ENCODE measurements at regions of chr13 and their contacts with region 1.

Region 1: DNA sequence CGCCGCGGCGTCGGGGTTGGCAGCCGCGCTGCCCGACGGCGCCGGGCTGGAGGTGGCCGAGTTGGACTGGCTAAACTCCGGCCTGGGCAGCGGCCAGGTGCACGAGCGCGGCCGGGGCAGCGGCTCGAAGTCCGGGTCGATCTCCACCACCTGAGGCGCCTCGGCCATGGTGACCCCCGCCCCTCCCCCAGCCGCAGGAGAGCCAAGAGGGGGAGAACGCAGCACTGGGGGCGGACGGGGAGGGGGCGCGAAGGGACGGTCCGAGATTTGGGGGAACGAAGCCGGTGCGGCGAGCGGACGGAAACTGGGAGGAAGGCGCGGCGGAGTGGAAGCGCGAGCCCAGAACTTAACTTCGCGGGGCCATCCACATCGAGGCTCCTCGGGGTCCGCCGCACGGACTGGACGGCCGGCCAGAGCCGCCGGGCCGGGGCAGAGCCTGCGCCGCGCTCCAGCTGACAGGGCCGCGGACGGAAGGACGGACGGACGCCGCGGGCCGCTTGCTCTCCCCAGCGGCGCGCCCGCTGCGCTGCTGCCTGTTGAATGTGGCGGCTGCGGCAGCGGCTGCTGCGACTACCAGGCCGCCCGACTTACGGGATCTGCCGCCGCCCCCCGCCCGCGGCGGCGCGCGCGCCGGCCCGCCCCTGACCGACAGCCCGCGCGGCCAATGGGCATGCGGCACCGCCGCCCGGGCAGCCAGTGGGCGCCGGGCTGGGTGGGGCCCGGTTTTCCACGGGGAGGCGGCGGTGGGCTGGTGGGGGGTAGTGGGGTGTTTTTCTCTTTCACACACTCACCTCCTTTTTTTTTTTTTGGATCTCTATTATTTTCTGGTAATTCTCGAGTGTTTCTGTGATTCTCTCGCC is at the start of gene FOXO1:
- DNase-seq: peak; percentile 97
- H3K4me3 Mint-ChIP-seq: peak within 1 kb of the TSS; percentile 93
- H3K27ac Mint-ChIP-seq: peak within 1 kb of the TSS; percentile 95
- H3K4me1 Mint-ChIP-seq: peaks cover 35% of the 10 kb centered on the region
- H3K27me3 Mint-ChIP-seq: no peaks in the 10 kb centered on the region
- total RNA-seq, gene FOXO1: 38.1 and 39.6 TPM in 2 replicates

Region 2: DNA sequence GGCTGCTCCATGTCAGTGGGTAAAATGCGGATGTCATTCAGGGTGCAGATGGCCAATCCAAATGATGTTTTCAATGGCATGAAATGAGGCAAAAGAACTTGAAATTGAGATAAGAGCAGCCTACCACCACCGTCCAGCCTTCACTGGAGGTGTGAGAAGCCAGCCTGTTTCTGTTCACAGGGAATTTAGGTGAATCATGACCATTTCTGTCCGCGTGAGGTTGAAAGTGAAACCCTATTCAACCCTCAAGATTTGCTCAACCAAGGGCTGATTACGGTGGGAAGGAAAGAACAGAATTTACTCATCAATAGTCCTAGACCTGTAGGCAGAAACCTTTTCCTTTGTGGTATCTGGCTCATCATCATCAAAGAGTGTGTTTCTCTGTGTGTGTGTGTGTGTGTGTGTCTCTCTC is 640.1 kb before region 1 on chr13:
- intact Hi-C with region 1: loop called (anchors 1 kb)
- DNase-seq: peak; percentile 91
- H3K4me3 Mint-ChIP-seq: peak overlapping the region; percentile 57
- H3K27ac Mint-ChIP-seq: peak overlapping the region; percentile 62
- H3K4me1 Mint-ChIP-seq: peaks cover 35% of the 10 kb centered on the region
- H3K27me3 Mint-ChIP-seq: peaks cover 10% of the 10 kb centered on the region

Region 3: DNA sequence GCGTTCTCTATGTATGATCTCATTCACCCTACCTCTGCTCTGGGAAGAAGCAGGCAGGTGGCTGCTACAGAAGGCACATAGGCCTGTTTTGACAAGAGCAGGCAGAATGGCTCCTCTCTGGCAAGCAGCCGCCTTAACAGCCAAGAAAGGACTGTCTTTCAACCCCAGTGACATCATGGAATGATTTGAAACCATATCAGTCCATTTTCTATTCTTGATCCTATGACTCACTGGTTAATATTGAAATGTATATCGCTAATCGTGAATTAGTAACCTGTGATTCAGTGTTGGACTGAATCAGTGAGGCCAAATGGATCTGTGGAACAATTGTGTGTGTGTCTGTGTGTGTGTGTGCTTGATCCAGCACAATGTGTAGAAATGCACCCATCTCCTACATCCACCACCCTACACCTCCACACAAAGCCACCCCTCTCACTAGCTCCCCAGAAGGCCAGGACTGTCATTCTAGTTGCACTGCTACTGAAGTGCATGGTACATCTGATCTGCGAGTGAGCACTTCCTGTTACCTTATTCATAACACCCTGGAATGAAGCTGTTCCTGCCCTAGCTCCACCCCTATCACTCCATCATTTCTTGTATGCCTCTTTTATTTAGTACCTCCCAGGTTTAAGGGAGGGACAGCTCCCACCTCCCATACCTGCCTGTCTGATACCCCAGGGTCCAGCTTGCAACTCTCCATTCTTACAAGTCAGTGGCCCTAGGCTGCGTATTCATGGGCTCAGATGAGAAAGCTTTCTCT is 459.9 kb before region 1 on chr13:
- intact Hi-C with region 1: loop called (anchors 2 kb)
- DNase-seq: peak; percentile 80
- H3K4me3 Mint-ChIP-seq: peak overlapping the region; percentile 63
- H3K27ac Mint-ChIP-seq: peak overlapping the region; percentile 97
- H3K4me1 Mint-ChIP-seq: peaks cover 37% of the 10 kb centered on the region
- H3K27me3 Mint-ChIP-seq: no peaks in the 10 kb centered on the region

Region 4: GRCh38 chr13:40371531-40372125 is 294.6 kb before region 1 on chr13:
- intact Hi-C with region 1: loop called (anchors 5 kb)
- DNase-seq: no peak
- H3K4me3 Mint-ChIP-seq: peak overlapping the region; percentile 62
- H3K27ac Mint-ChIP-seq: peak overlapping the region; percentile 54
- H3K4me1 Mint-ChIP-seq: peaks cover 39% of the 10 kb centered on the region
- H3K27me3 Mint-ChIP-seq: no peaks in the 10 kb centered on the region

Region 5: DNA sequence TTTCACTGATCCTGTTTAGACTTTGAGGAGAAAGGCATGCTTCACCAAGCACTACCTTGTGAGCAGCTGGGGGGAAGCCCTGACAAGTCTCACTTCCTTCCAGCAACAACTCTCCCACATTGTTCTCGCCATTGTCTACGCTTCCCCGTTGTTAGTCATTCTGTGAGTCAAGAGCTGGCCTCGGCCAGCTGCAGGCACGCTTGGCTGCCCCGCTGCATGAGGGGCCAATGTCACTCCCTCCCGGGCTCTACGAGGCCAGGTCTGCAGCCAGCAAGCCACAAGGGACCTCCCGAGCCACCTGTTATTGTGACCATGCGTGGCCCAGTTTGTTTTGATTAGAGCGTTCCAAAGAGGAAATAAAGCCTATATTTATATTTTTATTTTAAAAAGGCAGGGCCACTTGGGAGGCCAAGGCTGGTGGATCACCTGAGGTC is 220.7 kb before region 1 on chr13:
- intact Hi-C with region 1: no loop called
- DNase-seq: no peak
- H3K4me3 Mint-ChIP-seq: no peak overlapping the region
- H3K27ac Mint-ChIP-seq: no peak overlapping the region
- H3K4me1 Mint-ChIP-seq: peaks cover 12% of the 10 kb centered on the region
- H3K27me3 Mint-ChIP-seq: no peaks in the 10 kb centered on the region

Region 6: GRCh38 chr13:40517486-40518480 is 148.5 kb before region 1 on chr13:
- intact Hi-C with region 1: loop called (anchors 1 kb)
- DNase-seq: no peak
- H3K4me3 Mint-ChIP-seq: peak overlapping the region; percentile 72
- H3K27ac Mint-ChIP-seq: peak overlapping the region; percentile 92
- H3K4me1 Mint-ChIP-seq: peaks cover 63% of the 10 kb centered on the region
- H3K27me3 Mint-ChIP-seq: no peaks in the 10 kb centered on the region

Region 7: GRCh38 chr13:40770934-40771618 is 104.8 kb after region 1 on chr13 and contains the start of gene MRPS31:
- intact Hi-C with region 1: loop called (anchors 2 kb)
- DNase-seq: peak; percentile 98
- H3K4me3 Mint-ChIP-seq: peak within 1 kb of the TSS; percentile 98
- H3K27ac Mint-ChIP-seq: peak within 1 kb of the TSS; percentile 98
- H3K4me1 Mint-ChIP-seq: peaks cover 30% of the 10 kb centered on the region
- H3K27me3 Mint-ChIP-seq: no peaks in the 10 kb centered on the region
- total RNA-seq, gene MRPS31: 46.3 TPM in 2 replicates